Dendritic cell treated with granulocyte-macrophage colony-stimulating factor and Interleukin-4, amounts not matched to agents 40 ng/mL and 50 ng/mL, for 4 days (primary cell): ENCODE measurements at regions of chrX and their contacts with region 1.

Region 1: GRCh38 chrX:63350941-63351616 is at the start of gene SPIN4:
- H3K4me3 Mint-ChIP-seq: peak within 1 kb of the TSS; percentile 91
- H3K27ac Mint-ChIP-seq: peak within 1 kb of the TSS; percentile 92
- H3K4me1 Mint-ChIP-seq: peaks cover 24% of the 10 kb centered on the region
- H3K27me3 Mint-ChIP-seq: no peaks in the 10 kb centered on the region

Region 2: DNA sequence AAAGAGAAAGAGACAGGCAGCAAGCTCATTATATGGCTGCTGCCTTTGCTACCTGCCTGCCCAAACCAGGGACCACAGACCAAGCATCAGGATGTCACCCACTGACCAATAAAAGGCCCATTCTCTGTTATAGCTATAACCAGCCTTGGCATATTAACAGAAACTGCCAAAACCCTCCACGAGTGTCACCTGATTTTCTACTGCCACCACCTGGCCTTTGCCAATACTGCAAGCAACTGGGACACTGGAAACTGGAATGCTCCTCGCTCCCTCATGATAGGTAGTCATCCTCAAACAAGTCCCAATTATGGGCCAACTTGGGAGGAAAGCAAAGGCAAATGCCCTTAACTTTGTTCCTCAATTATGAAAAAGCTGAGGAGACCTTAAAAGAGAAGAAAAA is 76.0 kb before region 1 on chrX:
- intact Hi-C with region 1: no loop called
- H3K4me3 Mint-ChIP-seq: no peak overlapping the region
- H3K27ac Mint-ChIP-seq: no peak overlapping the region
- H3K4me1 Mint-ChIP-seq: no peaks in the 10 kb centered on the region
- H3K27me3 Mint-ChIP-seq: no peaks in the 10 kb centered on the region

Region 3: GRCh38 chrX:63560601-63561218 is 209.6 kb after region 1 on chrX:
- intact Hi-C with region 1: loop called (anchors 5 kb)
- H3K4me3 Mint-ChIP-seq: peak overlapping the region; percentile 98
- H3K27ac Mint-ChIP-seq: peak overlapping the region; percentile 92
- H3K4me1 Mint-ChIP-seq: no peaks in the 10 kb centered on the region
- H3K27me3 Mint-ChIP-seq: no peaks in the 10 kb centered on the region

Region 4: GRCh38 chrX:63754860-63755582 is 403.9 kb after region 1 on chrX:
- intact Hi-C with region 1: loop called (anchors 5 kb)
- H3K4me3 Mint-ChIP-seq: peak overlapping the region; percentile 92
- H3K27ac Mint-ChIP-seq: peak overlapping the region; percentile 95
- H3K4me1 Mint-ChIP-seq: peaks cover 57% of the 10 kb centered on the region
- H3K27me3 Mint-ChIP-seq: no peaks in the 10 kb centered on the region

Region 5: DNA sequence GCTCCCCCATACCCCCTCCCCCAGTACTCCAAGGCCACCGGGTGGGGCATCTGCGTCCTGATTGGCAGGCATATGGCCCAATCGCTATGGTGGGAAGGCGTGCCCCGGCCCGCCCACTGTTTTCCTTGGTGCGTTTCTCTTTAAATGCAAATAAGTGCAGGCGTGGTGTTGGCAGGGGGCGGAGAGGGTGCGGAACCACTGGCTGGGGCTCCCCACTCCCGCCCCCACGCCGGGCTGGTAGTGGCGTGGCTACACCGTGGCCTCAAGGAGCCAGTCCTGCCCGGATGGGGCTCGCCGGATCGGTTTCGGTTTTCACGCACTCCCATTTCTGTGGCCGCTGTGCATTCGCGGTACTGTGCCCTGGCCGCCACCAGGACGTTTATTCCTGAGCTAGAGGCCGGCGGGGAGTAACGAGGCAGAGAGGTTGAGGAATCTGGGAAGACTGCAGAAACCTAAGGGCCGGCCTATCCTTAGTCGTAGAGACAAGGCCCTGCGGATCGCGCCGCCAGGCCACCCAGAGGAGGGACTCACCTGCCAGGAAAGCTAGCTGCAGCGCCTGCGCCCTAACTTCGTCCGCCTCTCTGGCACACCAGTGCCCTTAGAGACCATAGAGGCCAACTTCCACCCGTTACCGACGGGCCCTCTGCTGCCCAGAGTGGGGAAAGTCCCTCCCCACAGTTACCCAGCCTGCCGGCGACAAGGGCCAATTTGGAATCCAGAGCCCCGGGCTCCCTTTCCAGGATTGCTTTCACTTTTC is 854.8 kb after region 1 on chrX:
- intact Hi-C with region 1: loop called (anchors 10 kb)
- H3K4me3 Mint-ChIP-seq: peak overlapping the region; percentile 88
- H3K27ac Mint-ChIP-seq: peak overlapping the region; percentile 93
- H3K4me1 Mint-ChIP-seq: peaks cover 24% of the 10 kb centered on the region
- H3K27me3 Mint-ChIP-seq: no peaks in the 10 kb centered on the region